Posterior cingulate gyrus (tissue), 11 donors: ENCODE measurements at regions of chr3 and their contacts with region 1.

Region 1: GRCh38 chr3:22565393-22565792 is 637.7 kb upstream of the UBE2E2 start:
- DNase-seq: no peak

Region 2: GRCh38 chr3:22887664-22888291 is 322.4 kb after region 1 on chr3:
- intact Hi-C with region 1: loop called (anchors 2 kb)
- DNase-seq: peak in 2 of 10 donors; percentile 7 to 75

Region 3: GRCh38 chr3:22960105-22960984 is 395.0 kb after region 1 on chr3:
- intact Hi-C with region 1: loop called (anchors 1 kb)
- DNase-seq: peak in 5 of 10 donors; percentile 18 to 38 (median 24)